ENCODE measurements at regions of chr11 and their contacts with region 1.

Region 1: DNA sequence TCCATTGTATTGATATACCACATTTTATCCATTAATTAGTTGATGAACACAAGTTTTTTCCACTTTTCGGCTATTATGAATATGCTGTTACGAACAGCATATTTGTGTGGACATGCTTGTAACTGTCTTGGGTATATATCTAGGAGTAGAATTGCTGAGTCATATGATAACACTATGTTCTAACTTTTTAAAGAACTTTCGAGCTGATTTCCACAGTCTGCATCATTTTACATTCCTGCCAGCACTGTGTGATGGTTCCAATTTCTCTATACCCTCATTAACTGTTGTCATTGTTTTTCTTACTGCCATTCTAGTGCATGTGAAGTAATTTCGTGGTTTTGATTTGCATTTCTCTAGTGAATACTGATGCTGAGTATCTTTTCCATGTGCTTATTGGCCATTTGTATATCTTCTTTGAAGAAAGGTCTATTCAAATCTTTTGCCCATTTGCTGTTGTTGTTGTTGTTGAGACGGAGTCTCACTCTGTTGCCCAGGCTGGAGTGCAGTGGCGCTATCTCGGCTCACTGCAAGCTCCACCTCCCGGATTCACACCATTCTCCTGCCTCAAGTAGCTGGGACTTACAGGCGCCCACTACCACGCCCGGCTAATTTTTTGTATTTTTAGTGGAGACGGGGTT is 7.4 kb upstream of the RCE1 start:
- DNase-seq: no peak

Region 2: GRCh38 chr11:66579017-66579606 is 256.8 kb before region 1 on chr11:
- intact Hi-C with region 1: loop called (anchors 10 kb)
- DNase-seq: peak; percentile 87

Region 3: DNA sequence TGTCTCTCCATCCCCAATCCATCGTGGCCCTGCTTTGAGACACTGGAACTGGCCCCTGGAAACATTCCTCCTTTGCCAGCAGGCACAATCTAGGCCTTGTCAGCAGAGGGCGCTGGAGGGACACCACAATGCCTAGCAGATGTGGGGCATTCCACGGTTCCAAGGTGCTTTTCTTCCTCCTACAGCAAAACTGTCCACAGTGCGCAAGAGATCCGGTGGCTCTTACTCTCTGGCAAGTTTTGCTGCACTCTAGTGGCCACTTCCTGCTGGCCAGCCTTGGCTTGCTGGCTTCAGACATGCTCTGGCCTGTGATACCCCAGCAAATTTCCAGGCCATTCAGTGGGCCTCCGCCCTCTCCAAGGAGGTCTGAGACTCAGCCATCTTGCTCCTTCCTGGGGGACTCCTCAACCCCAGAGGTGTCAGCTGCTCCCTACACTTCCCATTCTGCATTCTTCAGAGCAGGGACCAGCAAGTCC is 141.1 kb before region 1 on chr11:
- intact Hi-C with region 1: loop called (anchors 1 kb)
- DNase-seq: peak; percentile 90

Measured in cardiac septum (tissue), 1 donor.